ENCODE measurements at regions of chr16 and their contacts with region 1.

Region 1: GRCh38 chr16:88452482-88453216 is 431 bp upstream of the ZFPM1 start:
- DNase-seq: peak; percentile 98
- H3K4me3 Mint-ChIP-seq: peak overlapping the region; percentile 78
- H3K27ac Mint-ChIP-seq: peak overlapping the region; percentile 80
- H3K4me1 Mint-ChIP-seq: peaks cover 22% of the 10 kb centered on the region
- H3K27me3 Mint-ChIP-seq: no peaks in the 10 kb centered on the region

Region 2: GRCh38 chr16:87387942-87388817 is 1064.5 kb before region 1 on chr16:
- CTCF ChIA-PET with region 1: no interaction called
- intact Hi-C with region 1: loop called (anchors 5 kb)
- DNase-seq: peak; percentile 94
- H3K4me3 Mint-ChIP-seq: peak overlapping the region; percentile 49
- H3K27ac Mint-ChIP-seq: peak overlapping the region; percentile 93
- H3K4me1 Mint-ChIP-seq: peaks cover 39% of the 10 kb centered on the region
- H3K27me3 Mint-ChIP-seq: peaks cover 2% of the 10 kb centered on the region

Region 3: GRCh38 chr16:87950765-87951549 is 501.7 kb before region 1 on chr16 and contains the start of gene BANP:
- CTCF ChIA-PET with region 1: no interaction called
- intact Hi-C with region 1: loop called (anchors 2 kb)
- DNase-seq: peak; percentile 98
- H3K4me3 Mint-ChIP-seq: peak within 1 kb of the TSS; percentile 85
- H3K27ac Mint-ChIP-seq: peak within 1 kb of the TSS; percentile 99
- H3K4me1 Mint-ChIP-seq: peaks cover 41% of the 10 kb centered on the region
- H3K27me3 Mint-ChIP-seq: no peaks in the 10 kb centered on the region
- total RNA-seq, gene BANP: 35.1 to 38.6 TPM

Region 4: DNA sequence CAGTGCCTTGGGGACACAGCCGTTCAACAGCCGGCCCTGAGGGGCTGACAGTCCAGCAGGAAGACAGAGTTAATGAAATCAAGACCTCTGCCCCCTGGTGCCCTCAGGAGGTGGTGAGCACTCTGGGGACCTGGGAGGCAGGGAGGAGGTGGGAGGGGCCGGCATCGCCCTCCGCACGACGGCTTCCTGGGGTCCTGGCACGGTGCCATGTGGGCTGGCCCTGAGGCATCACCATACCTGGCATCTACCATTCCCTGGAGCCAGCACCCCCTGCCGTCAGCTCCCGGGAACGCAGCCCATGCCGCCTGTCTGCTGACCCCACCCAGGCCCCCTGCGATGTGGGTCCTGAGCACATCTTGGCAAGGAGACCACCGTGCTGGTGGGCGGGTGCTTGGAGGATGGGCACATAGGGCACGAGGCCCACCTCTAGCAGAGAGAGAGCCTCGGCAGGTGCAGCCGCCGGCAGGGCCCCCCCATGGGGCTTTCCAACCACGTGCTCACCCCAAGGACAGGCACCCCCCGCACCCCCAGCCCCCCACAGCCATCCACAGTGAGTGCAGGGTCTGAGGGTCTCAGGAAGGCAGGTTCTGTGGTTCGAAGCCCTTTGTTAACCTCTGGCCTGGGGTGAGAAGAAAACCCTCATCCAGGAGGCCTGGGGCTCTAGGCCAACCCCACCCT is 52.9 kb after region 1 on chr16:
- CTCF ChIA-PET with region 1: no interaction called
- intact Hi-C with region 1: loop called (anchors 2 kb)
- DNase-seq: peak; percentile 76
- H3K4me3 Mint-ChIP-seq: no peak overlapping the region
- H3K27ac Mint-ChIP-seq: no peak overlapping the region
- H3K4me1 Mint-ChIP-seq: peaks cover 4% of the 10 kb centered on the region
- H3K27me3 Mint-ChIP-seq: no peaks in the 10 kb centered on the region

Region 5: DNA sequence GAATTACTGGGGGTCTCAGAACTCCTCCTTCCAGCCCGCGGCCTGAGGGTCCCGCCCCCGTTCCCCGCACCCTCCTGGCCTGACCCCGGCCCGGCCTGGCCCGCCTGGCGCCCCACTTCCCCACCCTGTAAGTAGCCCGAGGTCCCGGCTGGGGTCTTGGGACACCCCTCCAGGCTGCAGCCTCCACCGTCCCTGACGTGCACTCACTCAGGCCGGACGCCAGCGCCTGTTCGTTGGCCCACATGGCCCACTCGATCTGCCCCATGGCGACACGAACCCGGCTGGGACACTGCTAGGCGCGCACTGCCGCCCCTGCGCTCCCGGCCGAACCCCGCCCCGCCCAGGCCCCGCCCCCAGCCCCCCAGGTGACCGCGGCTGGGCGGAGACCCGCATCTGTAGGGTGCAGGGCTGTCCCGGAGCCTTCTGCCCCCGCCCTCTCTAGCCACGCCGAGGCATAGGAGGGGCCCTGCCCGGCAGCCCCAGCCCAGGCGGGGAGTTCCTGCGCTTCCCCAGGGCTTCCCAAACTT is 198.2 kb after region 1 on chr16 and contains the start of gene CYBA:
- CTCF ChIA-PET with region 1: no interaction called
- intact Hi-C with region 1: loop called (anchors 1 kb)
- DNase-seq: peak; percentile 91
- H3K4me3 Mint-ChIP-seq: peak within 1 kb of the TSS; percentile 87
- H3K27ac Mint-ChIP-seq: peak within 1 kb of the TSS; percentile 95
- H3K4me1 Mint-ChIP-seq: peaks cover 18% of the 10 kb centered on the region
- H3K27me3 Mint-ChIP-seq: no peaks in the 10 kb centered on the region
- total RNA-seq, gene CYBA: 167 to 180 TPM

Region 6: DNA sequence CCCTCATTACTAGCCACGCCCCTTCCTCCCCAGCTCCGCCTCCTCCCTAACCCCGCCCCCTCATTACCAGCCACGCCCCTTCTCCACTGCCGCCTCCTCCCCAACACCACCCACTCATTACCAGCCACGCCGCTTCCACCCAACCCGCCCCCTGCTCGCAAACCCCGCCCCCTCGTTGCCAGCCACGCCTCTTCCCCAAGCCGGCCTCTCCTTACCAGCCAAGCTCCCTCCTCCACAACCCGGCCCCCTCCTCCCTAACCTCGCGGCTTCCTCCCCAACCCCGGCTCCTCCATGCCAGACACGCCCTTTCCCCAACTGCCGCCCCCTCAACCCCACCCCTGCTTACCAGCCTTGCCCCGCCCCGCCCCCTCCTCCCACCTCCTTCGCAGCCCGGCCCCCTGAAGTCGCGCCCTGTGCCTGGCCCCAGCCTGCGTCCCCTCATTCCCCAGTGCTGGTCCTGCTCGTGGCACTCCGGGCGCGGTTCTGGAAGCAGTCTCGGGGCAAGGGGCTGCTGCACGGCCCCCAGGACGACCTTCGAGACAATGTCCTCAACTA is 740.4 kb after region 1 on chr16:
- CTCF ChIA-PET with region 1: no interaction called
- intact Hi-C with region 1: loop called (anchors 2 kb)
- DNase-seq: no peak
- H3K4me3 Mint-ChIP-seq: no peak overlapping the region
- H3K27ac Mint-ChIP-seq: no peak overlapping the region
- H3K4me1 Mint-ChIP-seq: no peaks in the 10 kb centered on the region
- H3K27me3 Mint-ChIP-seq: no peaks in the 10 kb centered on the region